ENCODE measurements at regions of chr4 and their contacts with region 1.

Region 1: DNA sequence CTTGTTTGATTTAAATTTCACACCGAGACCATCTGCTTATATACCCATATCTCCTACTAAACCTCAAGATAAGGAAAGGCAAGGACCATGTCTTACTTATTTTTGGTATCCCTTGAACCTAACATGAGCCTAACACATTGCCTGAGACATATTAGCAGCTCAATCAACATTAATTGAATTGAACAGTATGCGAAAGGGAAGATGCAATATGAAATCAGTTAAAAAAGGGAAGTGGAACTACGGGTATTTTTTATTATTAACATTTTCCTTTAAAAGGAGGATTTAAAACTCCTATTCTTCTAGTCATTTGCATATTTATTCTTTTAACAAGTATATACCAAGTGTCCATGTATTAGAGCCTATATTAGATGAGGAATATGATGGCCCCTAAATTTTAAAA is 197.0 kb downstream of the CAMK2D start:
- DNase-seq: no peak
- ATAC-seq: peak; percentile 59
- H3K4me3 Mint-ChIP-seq: peak overlapping the region; percentile 81
- H3K27ac Mint-ChIP-seq: peak overlapping the region; percentile 97
- H3K4me1 Mint-ChIP-seq: peaks cover 87% of the 10 kb centered on the region
- H3K27me3 Mint-ChIP-seq: no peaks in the 10 kb centered on the region
- CTCF ChIP-seq: no peak

Region 2: DNA sequence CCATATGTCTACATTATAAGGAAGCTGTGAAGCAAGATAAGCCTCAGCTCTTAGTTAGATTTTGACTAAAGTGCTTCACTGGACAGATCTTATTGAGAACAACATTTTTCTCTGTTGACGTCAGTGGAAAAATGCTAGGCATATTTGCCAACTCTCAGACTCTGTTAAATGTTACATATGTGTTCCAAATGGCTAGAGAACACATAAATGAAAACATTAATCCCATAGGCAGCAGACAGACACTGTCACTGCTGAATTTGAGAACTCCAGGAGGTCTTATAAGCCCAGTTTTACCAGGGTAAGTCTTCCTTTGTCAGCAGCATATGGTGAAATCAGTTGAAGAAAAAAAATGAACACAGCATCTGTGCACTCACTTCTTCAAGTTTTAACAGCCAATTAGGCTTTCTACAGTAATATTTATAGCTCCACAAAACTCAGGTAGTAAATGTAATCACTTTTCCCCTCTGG is 10.2 kb after region 1 on chr4:
- CTCF ChIA-PET with region 1: interaction called, 9 read pairs
- POLR2A ChIA-PET with region 1: interaction called, 13 read pairs
- intact Hi-C with region 1: loop called (anchors 1 kb)
- DNase-seq: no peak
- ATAC-seq: peak; percentile 47
- H3K4me3 Mint-ChIP-seq: no peak overlapping the region
- H3K27ac Mint-ChIP-seq: peak overlapping the region; percentile 51
- H3K4me1 Mint-ChIP-seq: peaks cover 90% of the 10 kb centered on the region
- H3K27me3 Mint-ChIP-seq: no peaks in the 10 kb centered on the region
- CTCF ChIP-seq: no peak

Region 3: GRCh38 chr4:113618205-113618604 is 53.7 kb after region 1 on chr4:
- CTCF ChIA-PET with region 1: no interaction called
- POLR2A ChIA-PET with region 1: interaction called, 13 read pairs
- intact Hi-C with region 1: loop called (anchors 1 kb)
- DNase-seq: no peak
- ATAC-seq: peak; percentile 83
- H3K4me3 Mint-ChIP-seq: no peak overlapping the region
- H3K27ac Mint-ChIP-seq: no peak overlapping the region
- H3K4me1 Mint-ChIP-seq: peaks cover 48% of the 10 kb centered on the region
- H3K27me3 Mint-ChIP-seq: no peaks in the 10 kb centered on the region
- CTCF ChIP-seq: no peak

Region 4: GRCh38 chr4:113869743-113870375 is 305.4 kb after region 1 on chr4:
- CTCF ChIA-PET with region 1: no interaction called
- POLR2A ChIA-PET with region 1: no interaction called
- intact Hi-C with region 1: loop called (anchors 2 kb)
- DNase-seq: peak; percentile 40
- ATAC-seq: peak; percentile 94
- H3K4me3 Mint-ChIP-seq: peak overlapping the region; percentile 63
- H3K27ac Mint-ChIP-seq: peak overlapping the region; percentile 90
- H3K4me1 Mint-ChIP-seq: peaks cover 19% of the 10 kb centered on the region
- H3K27me3 Mint-ChIP-seq: no peaks in the 10 kb centered on the region
- CTCF ChIP-seq: no peak

Measured in activated B cell treated with CpG ODN at 0.5 μM for 24 hours (primary cell).